ENCODE measurements at regions of chr11 and their contacts with region 1.

Region 1: DNA sequence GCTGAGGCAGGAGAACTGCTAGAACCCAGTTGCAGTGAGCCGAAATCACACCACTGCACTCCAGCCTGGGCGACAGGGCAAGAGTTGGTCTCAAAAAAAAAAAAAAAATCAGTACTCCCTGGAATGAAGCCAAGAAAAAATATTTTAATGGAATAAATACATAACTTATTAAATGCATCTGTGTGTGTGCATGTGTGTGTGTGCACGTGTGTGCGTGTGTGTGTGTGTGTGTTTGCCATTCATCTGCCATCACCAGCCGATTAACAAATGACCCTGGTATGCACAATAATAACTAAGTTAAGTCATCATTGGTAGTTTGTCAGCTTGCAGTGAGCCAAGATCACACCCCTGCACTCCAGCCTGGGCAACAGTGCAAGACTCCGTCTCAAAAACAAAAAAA is 35.0 kb upstream of the SCGB1A1 start:
- DNase-seq: no peak
- H3K4me3 ChIP-seq: no peak overlapping the region
- H3K27ac ChIP-seq: no peak overlapping the region
- H3K4me1 ChIP-seq: peaks cover 0 to 3% of the 10 kb centered on the region in 2 donors
- H3K27me3 ChIP-seq: no peaks in the 10 kb centered on the region
- CTCF ChIP-seq: no peak
- POLR2A ChIP-seq: no peak

Region 2: DNA sequence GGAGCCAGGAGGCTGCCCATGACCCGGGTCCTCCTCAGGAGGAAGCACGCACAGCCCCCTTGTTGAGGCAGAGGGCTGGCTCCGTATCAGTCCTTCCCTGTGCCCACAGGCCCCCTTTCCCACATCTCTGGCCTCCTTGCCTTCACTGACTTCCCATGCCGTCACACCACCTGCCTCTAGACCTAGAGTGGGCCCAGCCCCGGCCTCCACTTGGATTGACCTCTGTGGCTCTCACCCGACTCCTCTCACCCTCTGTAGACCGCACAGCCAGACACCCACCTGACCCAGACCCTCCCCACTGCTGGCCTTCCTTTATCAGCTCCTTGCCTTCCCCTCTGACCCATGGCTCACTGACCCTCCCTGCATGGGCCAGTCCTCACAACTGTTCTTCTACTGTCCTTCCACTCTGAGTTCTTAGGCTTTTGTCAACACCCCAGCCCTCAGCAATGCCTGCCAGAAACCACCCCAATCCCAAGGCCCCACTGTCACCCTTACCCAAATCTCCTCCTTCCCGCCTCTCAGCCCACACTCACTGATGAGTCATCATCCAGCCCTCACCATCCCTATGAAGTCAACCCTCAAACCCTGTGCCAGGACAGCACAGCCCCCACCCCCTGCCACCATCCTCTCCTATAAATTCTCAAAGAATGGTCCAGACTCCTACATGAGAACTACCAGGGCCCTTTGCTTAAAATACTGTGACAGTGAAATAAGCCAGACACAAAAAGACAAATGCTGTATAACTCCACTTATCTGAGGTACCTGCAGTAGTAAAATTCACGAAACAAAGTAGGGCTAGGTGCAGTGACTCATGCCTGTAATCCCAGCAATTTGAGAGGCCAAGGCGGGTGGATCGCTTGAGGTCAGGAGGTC is 88.4 kb after region 1 on chr11:
- intact Hi-C with region 1: no loop called
- DNase-seq: peak in 5 of 7 donors; percentile 22 to 60 (median 29)
- H3K4me3 ChIP-seq: no peak overlapping the region
- H3K27ac ChIP-seq: peak overlapping the region in 1 of 5 donors; percentile 10
- H3K4me1 ChIP-seq: peaks cover 0 to 5% of the 10 kb centered on the region in 2 donors
- H3K27me3 ChIP-seq: no peaks in the 10 kb centered on the region
- CTCF ChIP-seq: no peak
- POLR2A ChIP-seq: no peak

Region 3: GRCh38 chr11:62694455-62695167 is 310.8 kb after region 1 on chr11:
- intact Hi-C with region 1: loop called in 1 of 2 experiments (anchors 5 kb)
- DNase-seq: peak; percentile 84 to 95 (median 92)
- H3K4me3 ChIP-seq: no peak overlapping the region
- H3K27ac ChIP-seq: peak overlapping the region in 3 of 5 donors; percentile 22 to 62 (median 59)
- H3K4me1 ChIP-seq: peaks cover 0 to 2% of the 10 kb centered on the region in 2 donors
- H3K27me3 ChIP-seq: no peaks in the 10 kb centered on the region
- CTCF ChIP-seq: peak; percentile 70 to 88 (median 84)
- POLR2A ChIP-seq: peak in 1 of 2 donors; percentile 15